Left cardiac atrium (tissue), 4 donors: ENCODE measurements at regions of chr4 and their contacts with region 1.

Region 1: GRCh38 chr4:37977471-37978247 is 17.5 kb downstream of the PTTG2 start:
- DNase-seq: peak; percentile 84
- ATAC-seq: peak; percentile 86 to 88

Region 2: DNA sequence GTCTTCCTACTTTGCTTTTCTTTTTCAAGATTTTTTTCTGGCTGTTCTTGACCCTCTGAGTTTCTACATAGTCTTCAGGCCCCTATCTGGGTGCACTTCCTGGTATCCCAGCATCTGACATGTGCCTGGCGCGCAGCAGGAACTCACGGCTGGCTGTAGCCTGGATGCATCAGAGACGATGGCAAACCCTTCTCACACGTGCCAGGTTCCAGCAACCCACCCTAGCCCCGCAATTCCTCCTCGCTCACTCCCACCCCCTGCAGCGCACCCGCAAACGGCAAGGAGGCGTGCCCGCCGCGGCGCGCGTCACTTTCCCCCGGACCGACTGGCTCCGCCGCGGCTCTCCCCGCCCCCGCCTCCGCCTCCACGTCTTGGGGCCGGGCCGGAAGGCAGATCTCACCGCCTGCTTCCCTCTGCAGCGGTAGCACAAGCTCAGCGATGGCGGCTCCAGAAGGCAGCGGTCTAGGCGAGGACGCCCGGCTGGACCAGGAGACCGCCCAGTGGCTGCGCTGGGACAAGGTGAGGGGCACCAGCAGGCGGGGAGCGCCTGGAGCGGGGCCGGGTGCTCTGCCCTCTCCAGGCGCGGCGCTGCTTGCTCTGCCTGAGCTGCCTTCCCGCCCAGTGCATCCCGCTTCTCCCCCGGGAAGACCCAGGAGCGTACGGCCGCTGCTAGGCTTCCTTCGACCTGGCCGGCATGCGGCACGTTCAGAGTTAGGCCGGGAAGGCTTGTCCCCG is 151.2 kb before region 1 on chr4 and contains the start of gene PGM2:
- intact Hi-C with region 1: loop called (anchors 10 kb)
- DNase-seq: peak; percentile 93
- ATAC-seq: peak; percentile 96 to 98
- total RNA-seq, gene PGM2: 13.8 to 17.6 TPM

Region 3: DNA sequence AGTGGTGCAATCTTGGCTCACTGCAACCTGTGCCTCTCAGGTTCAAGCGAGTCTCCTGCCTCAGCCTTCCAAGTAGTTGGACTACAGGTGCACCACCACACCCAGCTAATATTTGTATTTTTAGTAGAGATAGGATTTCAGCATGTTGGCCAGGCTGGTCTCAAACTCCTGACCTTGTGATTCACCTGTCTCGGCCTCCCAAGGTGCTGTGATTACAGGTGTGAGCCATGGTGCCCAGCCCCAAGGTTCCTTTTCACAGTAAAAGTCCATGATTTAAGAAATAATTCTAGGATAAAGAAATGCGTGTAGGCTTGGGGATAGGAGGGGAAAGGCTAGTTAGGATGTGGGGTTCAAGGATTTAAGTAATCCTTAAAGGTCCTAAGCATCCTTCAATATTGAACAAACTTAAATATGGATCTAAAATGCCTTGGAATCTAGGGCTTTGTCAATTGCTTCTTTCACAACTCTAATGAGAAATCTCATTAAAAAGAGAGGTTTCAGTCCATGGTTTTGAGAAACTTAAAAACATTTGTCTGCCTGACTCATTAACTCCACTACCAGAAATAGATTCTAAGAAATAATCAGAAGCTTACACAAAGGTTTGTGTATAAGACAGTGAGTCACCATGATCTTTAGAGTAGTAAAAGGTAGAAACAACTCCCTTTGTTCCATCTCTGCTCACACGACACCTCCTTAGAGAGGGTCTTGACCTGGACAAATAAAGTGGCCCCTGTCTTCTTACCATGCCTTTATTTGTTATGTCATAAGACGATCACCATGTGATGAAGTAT is 185.8 kb after region 1 on chr4:
- intact Hi-C with region 1: no loop called
- DNase-seq: no peak
- ATAC-seq: no peak

Region 4: GRCh38 chr4:38529189-38530115 is 551.8 kb after region 1 on chr4:
- intact Hi-C with region 1: no loop called
- DNase-seq: peak; percentile 39
- ATAC-seq: peak; percentile 68 to 79